GM12878 (cell line): ENCODE measurements at regions of chr16 and their contacts with region 1.

Region 1: DNA sequence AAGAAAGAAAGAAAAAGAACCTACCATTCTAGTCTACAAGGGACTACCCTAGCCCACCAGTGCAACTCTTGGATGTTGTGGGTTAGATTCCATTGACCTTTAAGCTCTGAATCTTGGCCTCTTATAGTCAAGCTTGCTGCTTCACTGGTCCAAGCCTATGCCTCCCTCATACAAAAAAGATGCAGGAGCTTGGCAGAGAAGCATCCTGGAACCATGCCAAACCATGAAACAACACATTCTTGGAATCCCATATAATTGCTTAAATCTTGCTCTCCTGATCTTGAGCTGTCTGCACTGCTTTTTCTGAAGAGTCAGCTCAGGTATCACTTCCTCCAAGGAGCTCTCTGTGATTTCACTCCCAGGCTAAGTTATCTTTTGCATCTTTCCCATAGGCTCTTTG is 117.9 kb upstream of the GPR139 start:
- DNase-seq: no peak
- ATAC-seq: no peak
- H3K4me3 ChIP-seq: no peak overlapping the region
- H3K27ac ChIP-seq: no peak overlapping the region
- H3K4me1 ChIP-seq: no peaks in the 10 kb centered on the region
- H3K27me3 ChIP-seq: no peaks in the 10 kb centered on the region
- CTCF ChIP-seq: no peak
- EP300 ChIP-seq: no peak
- POLR2A ChIP-seq: no peak
- RAD21 ChIP-seq: no peak

Region 2: DNA sequence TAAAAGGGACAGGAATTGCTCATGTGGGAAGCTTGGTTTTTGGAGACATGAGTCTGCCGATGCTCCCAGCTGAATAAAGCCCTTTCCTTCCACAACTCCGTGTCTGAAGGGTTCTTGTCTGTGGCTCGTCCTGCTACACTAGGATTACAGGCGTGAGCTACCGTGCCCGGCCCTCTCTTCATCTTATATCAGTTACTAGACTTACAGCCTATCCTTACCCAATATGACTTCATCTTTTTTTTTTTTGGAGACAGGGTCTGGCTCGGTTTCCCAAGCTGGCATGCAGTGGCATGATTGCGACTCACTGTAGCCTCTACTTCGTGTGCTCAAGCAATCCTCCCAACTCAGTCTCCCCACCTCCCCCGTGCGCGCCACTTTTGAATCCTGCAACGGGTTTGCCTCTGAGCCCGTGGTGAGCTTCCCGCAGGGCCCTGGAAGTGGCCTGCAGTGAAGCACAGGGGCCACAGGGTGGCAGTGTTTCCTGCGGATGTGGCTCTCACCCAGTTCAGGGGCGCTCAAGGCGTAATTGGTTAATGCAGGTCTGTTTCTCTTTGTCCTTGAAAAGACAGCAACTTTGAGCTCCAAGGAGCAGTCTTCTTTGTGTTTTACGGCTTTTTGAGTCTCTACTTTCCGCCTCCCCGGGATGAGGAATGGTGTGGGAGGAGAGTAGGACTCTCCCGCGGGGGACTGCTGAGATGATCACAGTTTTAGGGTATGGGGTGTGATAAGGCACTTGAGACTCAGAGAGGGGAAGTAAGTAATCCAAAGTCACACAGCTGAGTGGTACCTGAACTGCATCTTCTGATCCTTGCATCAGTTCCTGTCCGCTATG is 284.2 kb before region 1 on chr16:
- CTCF ChIA-PET with region 1: interaction called, 3 read pairs
- POLR2A ChIA-PET with region 1: no interaction called
- RAD21 ChIA-PET with region 1: no interaction called
- SMC1A ChIA-PET with region 1: no interaction called
- in situ Hi-C with region 1: no loop called
- intact Hi-C with region 1: loop called (anchors 10 kb)
- DNase-seq: peak; percentile 7
- ATAC-seq: peak; percentile 100
- H3K4me3 ChIP-seq: no peak overlapping the region
- H3K27ac ChIP-seq: no peak overlapping the region
- H3K4me1 ChIP-seq: no peaks in the 10 kb centered on the region
- H3K27me3 ChIP-seq: no peaks in the 10 kb centered on the region
- CTCF ChIP-seq: peak; percentile 94 to 98 (median 96); a peak in 5 of 6 replicates
- EP300 ChIP-seq: no peak
- POLR2A ChIP-seq: no peak
- RAD21 ChIP-seq: peak; percentile 92

Region 3: DNA sequence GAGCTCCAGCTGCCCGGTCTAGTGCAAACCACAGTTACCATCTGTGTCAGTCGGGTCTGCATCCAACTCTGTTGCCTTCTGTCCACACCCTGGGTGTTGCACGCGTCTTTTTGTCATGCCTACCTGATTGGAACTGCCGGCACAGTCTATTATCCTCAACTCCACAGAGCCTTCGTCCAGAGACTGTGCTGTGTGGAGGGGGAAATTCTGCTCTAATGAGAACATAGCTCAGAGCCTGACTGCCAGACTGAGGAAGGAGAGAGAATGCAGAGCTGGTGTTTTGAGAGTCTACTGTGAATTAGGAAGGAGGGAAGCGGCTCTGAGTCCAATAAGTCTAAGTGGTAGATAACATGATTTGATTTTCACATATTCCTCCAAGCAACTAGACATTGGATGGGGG is 49.6 kb before region 1 on chr16:
- CTCF ChIA-PET with region 1: no interaction called
- POLR2A ChIA-PET with region 1: no interaction called
- RAD21 ChIA-PET with region 1: no interaction called
- SMC1A ChIA-PET with region 1: no interaction called
- in situ Hi-C with region 1: no loop called
- intact Hi-C with region 1: loop called (anchors 5 kb)
- DNase-seq: no peak
- ATAC-seq: no peak
- H3K4me3 ChIP-seq: no peak overlapping the region
- H3K27ac ChIP-seq: no peak overlapping the region
- H3K4me1 ChIP-seq: no peaks in the 10 kb centered on the region
- H3K27me3 ChIP-seq: no peaks in the 10 kb centered on the region
- CTCF ChIP-seq: no peak
- EP300 ChIP-seq: no peak
- POLR2A ChIP-seq: no peak
- RAD21 ChIP-seq: no peak